ENCODE measurements at regions of chr17 and their contacts with region 1.

Region 1: GRCh38 chr17:48492401-48493298 is 38.2 kb downstream of the HOXB1 start:
- DNase-seq: peak; percentile 53 to 76
- H3K4me3 ChIP-seq: no peak overlapping the region
- H3K27ac ChIP-seq: no peak overlapping the region
- H3K4me1 ChIP-seq: peaks cover 0 to 3% of the 10 kb centered on the region in 2 donors
- H3K27me3 ChIP-seq: no peaks in the 10 kb centered on the region
- CTCF ChIP-seq: peak; percentile 77 to 94 (median 92)
- POLR2A ChIP-seq: no peak

Region 2: DNA sequence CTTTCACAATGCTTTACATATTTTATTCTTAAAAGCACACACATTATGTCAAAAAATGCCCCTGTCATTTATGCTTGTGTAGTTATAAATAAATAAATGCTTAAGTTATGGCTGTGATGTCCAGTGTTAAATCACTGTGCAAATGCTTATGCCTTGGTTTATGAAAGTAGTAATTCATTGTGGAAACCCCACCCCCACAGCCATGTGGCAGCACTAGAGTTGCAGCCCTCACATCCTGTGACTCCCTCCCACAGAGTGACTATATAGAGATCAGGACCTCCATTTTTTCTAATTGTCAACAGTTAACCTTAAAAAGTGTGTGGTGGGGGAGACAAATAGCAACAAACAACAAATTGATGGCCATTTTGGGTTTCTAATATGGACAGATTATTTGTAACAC is 65.1 kb before region 1 on chr17:
- intact Hi-C with region 1: no loop called
- DNase-seq: no peak
- H3K4me3 ChIP-seq: no peak overlapping the region
- H3K27ac ChIP-seq: no peak overlapping the region
- H3K4me1 ChIP-seq: peaks cover 0 to 4% of the 10 kb centered on the region in 2 donors
- H3K27me3 ChIP-seq: peaks cover 0 to 6% of the 10 kb centered on the region in 2 donors
- CTCF ChIP-seq: no peak
- POLR2A ChIP-seq: no peak

Region 3: DNA sequence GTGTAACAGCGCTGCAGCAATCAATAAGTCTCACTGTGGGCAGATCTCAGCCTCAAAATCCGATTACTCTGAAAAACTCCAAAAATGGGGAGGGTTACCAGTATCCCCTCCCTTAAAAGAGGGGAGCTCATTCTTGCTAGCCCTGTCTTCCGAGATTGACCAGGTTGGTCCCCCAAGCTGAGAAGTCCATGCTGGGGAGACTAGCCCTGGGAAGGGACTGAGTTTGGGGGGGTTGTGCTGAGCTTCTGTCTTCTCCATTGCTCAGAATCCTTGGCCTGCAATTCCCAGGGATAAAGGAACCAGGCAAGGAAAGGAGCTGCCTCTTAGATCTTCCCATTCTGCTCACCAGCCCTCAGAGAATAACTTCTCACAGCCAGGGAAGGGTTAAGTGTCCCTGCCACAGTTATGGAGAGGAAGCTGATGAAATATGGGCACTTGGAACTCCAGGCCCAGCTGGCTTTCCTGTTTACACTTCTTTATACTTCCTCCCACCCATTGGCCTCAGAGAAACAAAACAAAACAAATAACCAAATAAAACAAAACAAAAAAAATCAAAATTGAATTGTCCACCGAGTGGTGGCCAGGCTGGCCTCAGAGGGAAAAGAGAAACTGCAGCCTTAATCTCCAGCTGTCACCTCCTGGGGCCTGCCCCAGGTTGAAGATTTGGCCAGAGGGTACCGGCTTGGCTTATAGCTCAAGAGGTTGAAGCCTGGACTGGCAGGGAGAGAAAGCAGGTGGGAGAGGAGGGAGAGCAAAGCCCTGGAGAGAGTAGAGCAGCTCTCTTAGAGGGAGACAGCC is 94.8 kb after region 1 on chr17:
- intact Hi-C with region 1: loop called (anchors 2 kb)
- DNase-seq: no peak
- H3K4me3 ChIP-seq: no peak overlapping the region
- H3K27ac ChIP-seq: peak overlapping the region; percentile 79 to 87
- H3K4me1 ChIP-seq: peaks cover 0 to 6% of the 10 kb centered on the region in 2 donors
- H3K27me3 ChIP-seq: peaks cover 0 to 43% of the 10 kb centered on the region in 2 donors
- CTCF ChIP-seq: no peak
- POLR2A ChIP-seq: no peak

Measured in uterus (tissue), 4 donors.